Activated CD4-positive, alpha-beta T cell treated with anti-CD3 and anti-CD28 coated beads, Interleukin-2, amount 10 ng/mL, durations not matched to agents 24 days and 14 days (primary cell): ENCODE measurements at regions of chr22 and their contacts with region 1.

Region 1: GRCh38 chr22:19717691-19718455 is 3.6 kb downstream of the SEPTIN5 start:
- DNase-seq: peak; percentile 96
- H3K4me3 Mint-ChIP-seq: peak overlapping the region; percentile 78
- H3K27ac Mint-ChIP-seq: no peak overlapping the region
- H3K4me1 Mint-ChIP-seq: peaks cover 6% of the 10 kb centered on the region
- H3K27me3 Mint-ChIP-seq: peaks cover 46% of the 10 kb centered on the region

Region 2: DNA sequence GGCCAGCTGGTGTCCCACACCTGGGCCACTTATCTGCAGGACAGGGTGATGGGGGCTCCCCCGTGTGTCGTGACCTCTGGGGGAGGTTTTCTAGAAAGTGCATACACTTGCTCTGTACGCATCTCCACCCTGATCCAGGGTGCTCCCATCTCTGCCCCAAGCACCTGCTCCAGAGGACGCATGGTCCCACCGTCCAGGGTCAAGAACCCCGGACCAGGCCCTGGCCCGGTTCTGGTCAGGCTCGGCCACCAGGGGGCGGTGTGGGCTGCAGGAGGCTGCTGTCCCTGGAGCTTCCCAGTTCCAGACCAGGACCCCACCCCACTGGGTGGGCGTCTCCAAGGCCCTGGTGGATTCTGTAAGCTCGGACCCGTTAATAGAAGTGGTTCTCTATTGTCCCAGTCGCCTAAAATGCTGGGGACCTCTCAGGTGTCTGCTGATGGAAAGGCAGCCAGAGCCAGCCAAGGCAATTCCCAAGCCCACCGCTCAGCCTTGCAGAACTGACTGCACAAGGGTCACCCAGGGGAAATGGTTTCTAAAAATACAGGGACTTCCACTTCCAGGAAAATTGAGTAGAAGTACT is 38.3 kb before region 1 on chr22:
- intact Hi-C with region 1: loop called (anchors 1 kb)
- DNase-seq: peak; percentile 82
- H3K4me3 Mint-ChIP-seq: no peak overlapping the region
- H3K27ac Mint-ChIP-seq: no peak overlapping the region
- H3K4me1 Mint-ChIP-seq: no peaks in the 10 kb centered on the region
- H3K27me3 Mint-ChIP-seq: peaks cover 20% of the 10 kb centered on the region